ENCODE measurements at regions of chr21 and their contacts with region 1.

Region 1: GRCh38 chr21:26967062-26967913 is at the start of gene ADAMTS5:
- DNase-seq: peak; percentile 45 to 72 (median 61)
- ATAC-seq: peak; percentile 28 to 68 (median 59)
- H3K4me3 ChIP-seq: peak within 1 kb of the TSS; percentile 35 to 74 (median 64)
- H3K27ac ChIP-seq: peak within 1 kb of the TSS; percentile 0 to 82 (median 69)
- H3K4me1 ChIP-seq: peaks cover 0 to 26% (median 11%) of the 10 kb centered on the region in 12 donors
- H3K27me3 ChIP-seq: peaks cover 0 to 50% (median 7%) of the 10 kb centered on the region in 9 donors
- CTCF ChIP-seq: no peak
- POLR2A ChIP-seq: peak in 1 of 2 donors; percentile 36
- total RNA-seq, gene ADAMTS5: 0.98 to 22.7 (median 3.6) TPM

Region 2: DNA sequence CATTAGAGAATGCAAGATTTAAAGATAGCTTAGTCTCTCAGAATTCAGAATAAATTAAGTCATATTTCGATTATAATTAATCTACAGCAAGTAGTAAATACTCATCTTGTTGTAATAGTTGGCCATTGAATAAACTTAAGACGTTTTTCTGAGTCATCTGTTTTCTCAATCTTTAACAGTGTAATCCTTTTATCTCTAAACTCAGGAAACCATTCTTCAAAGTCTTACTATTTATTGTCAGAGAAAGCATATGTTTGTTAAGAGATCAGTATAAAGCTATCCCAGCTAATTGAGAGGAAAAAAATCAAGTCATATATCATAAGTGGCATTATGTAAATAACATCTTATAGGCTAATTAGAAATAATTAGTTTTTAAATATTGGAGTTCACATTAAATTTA is 200.8 kb after region 1 on chr21:
- intact Hi-C with region 1: loop called in 1 of 10 experiments (anchors 10 kb)
- DNase-seq: no peak
- ATAC-seq: no peak
- H3K4me3 ChIP-seq: no peak overlapping the region
- H3K27ac ChIP-seq: no peak overlapping the region
- H3K4me1 ChIP-seq: peaks cover 0 to 4% (median 0%) of the 10 kb centered on the region in 12 donors
- H3K27me3 ChIP-seq: no peaks in the 10 kb centered on the region
- CTCF ChIP-seq: no peak
- POLR2A ChIP-seq: no peak

Region 3: DNA sequence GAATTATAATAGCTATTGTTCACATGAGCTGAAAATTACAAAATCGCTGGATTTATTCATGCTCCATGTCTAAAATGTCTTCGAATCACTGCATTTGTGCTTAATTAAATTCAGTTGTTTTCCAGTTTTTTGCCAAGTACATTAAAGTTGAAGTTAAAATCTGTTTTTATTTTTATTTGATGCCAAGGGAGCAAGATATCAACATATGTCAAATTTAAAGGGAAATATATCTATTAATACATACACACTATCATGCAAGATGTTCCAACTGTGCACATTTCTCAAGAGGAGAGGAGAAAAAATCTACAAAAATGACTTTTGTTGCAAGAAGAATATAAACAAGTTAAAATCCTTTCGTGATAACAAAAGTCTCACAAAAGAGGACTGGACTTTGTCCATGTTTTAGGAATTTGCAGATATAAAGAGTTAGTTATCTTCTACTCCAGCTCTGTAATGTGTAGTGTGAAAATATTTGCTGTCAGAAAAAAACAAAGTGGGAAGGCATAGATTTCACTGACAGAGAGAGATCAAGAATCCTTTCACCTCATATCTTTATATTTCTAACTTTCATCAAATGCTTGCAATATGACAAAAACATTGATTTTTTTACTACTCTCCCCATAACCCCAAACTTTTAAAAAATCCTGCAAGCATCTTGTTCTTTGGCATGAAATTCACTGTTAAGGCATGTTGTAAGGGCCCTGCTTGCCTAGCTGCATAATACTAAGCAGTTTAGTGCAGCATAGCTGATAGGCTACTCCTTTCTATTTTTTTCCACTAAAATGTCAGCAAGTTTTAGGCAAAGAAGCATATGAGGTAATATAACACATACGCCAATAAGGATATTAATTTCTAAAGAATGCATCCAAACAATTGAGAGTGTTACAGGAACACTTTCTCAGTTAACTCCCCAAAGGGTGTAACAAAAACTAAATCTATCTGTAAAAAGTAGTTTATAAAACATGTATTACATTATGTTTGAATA is 339.8 kb after region 1 on chr21:
- intact Hi-C with region 1: loop called in 1 of 10 experiments (anchors 10 kb)
- DNase-seq: no peak
- ATAC-seq: peak; percentile 55 to 73 (median 61)
- H3K4me3 ChIP-seq: no peak overlapping the region
- H3K27ac ChIP-seq: peak overlapping the region in 6 of 12 donors; percentile 16 to 43 (median 28)
- H3K4me1 ChIP-seq: peaks cover 0 to 17% (median 0%) of the 10 kb centered on the region in 12 donors
- H3K27me3 ChIP-seq: no peaks in the 10 kb centered on the region
- CTCF ChIP-seq: no peak
- POLR2A ChIP-seq: no peak

Measured in heart left ventricle (tissue), 16 donors.